H1 (cell line): ENCODE measurements at regions of chr19 and their contacts with region 1.

Region 1: GRCh38 chr19:34838753-34839431 is 65.9 kb upstream of the ZNF599 start:
- DNase-seq: peak; percentile 56 to 87
- H3K4me3 ChIP-seq: peak overlapping the region; percentile 28 to 58 (median 36); a peak in 7 of 8 replicates
- H3K27ac ChIP-seq: no peak overlapping the region
- H3K4me1 ChIP-seq: peaks cover 0 to 10% (median 8%) of the 10 kb centered on the region in 4 experiments; a peak in 6 of 7 replicates
- H3K27me3 ChIP-seq: peaks cover 0 to 19% (median 10%) of the 10 kb centered on the region in 4 experiments; a peak in 5 of 7 replicates
- CTCF ChIP-seq: peak; percentile 78 to 85 (median 83)
- EP300 ChIP-seq: no peak
- POLR2A ChIP-seq: no peak
- RAD21 ChIP-seq: peak; percentile 48 to 68; a peak in 3 of 4 replicates

Region 2: GRCh38 chr19:34772697-34773554 is 66.0 kb before region 1 on chr19 and contains the start of gene ZNF599:
- CTCF ChIA-PET with region 1: interaction called, 10 read pairs
- POLR2A ChIA-PET with region 1: no interaction called
- DNase-seq: peak; percentile 64 to 91
- H3K4me3 ChIP-seq: peak within 1 kb of the TSS; percentile 78 to 93 (median 82)
- H3K27ac ChIP-seq: no peak within 1 kb of the TSS
- H3K4me1 ChIP-seq: peaks cover 0 to 4% (median 0%) of the 10 kb centered on the region in 4 experiments; a peak in 1 of 7 replicates
- H3K27me3 ChIP-seq: peaks cover 0 to 5% (median 2%) of the 10 kb centered on the region in 4 experiments; a peak in 3 of 7 replicates
- CTCF ChIP-seq: no peak
- EP300 ChIP-seq: no peak
- POLR2A ChIP-seq: no peak
- RAD21 ChIP-seq: no peak
- total RNA-seq, gene ZNF599: 3.8 and 4.8 TPM in 2 replicates

Region 3: DNA sequence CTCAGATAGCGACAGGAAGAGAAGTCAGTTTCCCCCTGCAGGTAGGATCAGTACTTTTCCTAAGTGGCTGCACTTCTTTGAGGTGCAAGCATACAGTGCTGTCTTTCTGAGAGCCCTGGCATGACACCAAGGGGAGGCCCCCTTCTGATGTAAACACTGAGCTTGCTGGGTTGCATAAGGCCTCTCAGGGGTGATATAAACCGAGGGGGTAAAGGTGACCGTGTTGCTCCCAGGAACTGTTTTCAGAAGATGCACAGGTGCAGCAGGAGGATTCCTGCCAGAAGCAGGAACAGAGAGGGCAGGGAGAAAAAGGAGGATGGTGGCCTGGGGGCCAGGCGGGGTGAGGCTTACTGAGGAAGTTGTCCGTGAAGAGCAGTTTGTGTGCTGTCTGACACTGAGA is 13.8 kb after region 1 on chr19:
- CTCF ChIA-PET with region 1: interaction called, 15 read pairs
- POLR2A ChIA-PET with region 1: interaction called, 4 read pairs
- DNase-seq: no peak
- H3K4me3 ChIP-seq: no peak overlapping the region
- H3K27ac ChIP-seq: no peak overlapping the region
- H3K4me1 ChIP-seq: 0 out of 7 replicates have a peak, but pooled peaks cover 0 to 2% (median 0%) of the 10 kb centered on the region in 4 experiments
- H3K27me3 ChIP-seq: no peaks in the 10 kb centered on the region
- CTCF ChIP-seq: no peak
- EP300 ChIP-seq: no peak
- POLR2A ChIP-seq: no peak
- RAD21 ChIP-seq: no peak

Region 4: DNA sequence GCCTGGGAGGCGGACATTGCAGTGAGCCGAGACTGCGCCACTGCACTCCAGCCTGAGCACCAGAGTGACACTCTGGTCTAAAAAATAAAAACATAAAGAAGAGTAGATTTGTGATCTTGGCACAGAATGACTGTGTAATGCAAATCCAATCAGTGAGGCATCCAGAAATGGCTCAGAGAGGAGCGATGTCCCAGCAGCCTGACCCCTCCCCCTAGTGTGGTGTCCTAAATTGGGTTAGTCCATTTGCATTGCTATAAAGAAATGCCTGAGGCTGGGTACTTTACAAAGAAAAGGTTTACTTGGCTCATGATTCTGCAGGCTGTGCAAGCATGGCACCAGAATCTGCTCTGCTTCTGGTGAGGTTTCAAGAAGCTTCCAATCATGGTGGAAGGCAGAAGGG is 28.7 kb after region 1 on chr19:
- CTCF ChIA-PET with region 1: interaction called, 12 read pairs
- POLR2A ChIA-PET with region 1: no interaction called
- DNase-seq: no peak
- H3K4me3 ChIP-seq: no peak overlapping the region
- H3K27ac ChIP-seq: no peak overlapping the region
- H3K4me1 ChIP-seq: peaks cover 0 to 3% (median 0%) of the 10 kb centered on the region in 4 experiments; a peak in 2 of 7 replicates
- H3K27me3 ChIP-seq: no peaks in the 10 kb centered on the region
- CTCF ChIP-seq: no peak
- EP300 ChIP-seq: no peak
- POLR2A ChIP-seq: no peak
- RAD21 ChIP-seq: no peak

Region 5: GRCh38 chr19:34974646-34975045 is 135.8 kb after region 1 on chr19:
- CTCF ChIA-PET with region 1: interaction called, 12 read pairs
- POLR2A ChIA-PET with region 1: no interaction called
- DNase-seq: no peak
- H3K4me3 ChIP-seq: no peak overlapping the region
- H3K27ac ChIP-seq: no peak overlapping the region
- H3K4me1 ChIP-seq: peaks cover 0 to 3% (median 0%) of the 10 kb centered on the region in 4 experiments; a peak in 3 of 7 replicates
- H3K27me3 ChIP-seq: no peaks in the 10 kb centered on the region
- CTCF ChIP-seq: no peak
- EP300 ChIP-seq: no peak
- POLR2A ChIP-seq: no peak
- RAD21 ChIP-seq: no peak

Region 6: GRCh38 chr19:35030257-35031071 is 191.6 kb after region 1 on chr19 and contains the start of gene SCN1B:
- CTCF ChIA-PET with region 1: interaction called, 11 read pairs
- POLR2A ChIA-PET with region 1: interaction called, 3 read pairs
- DNase-seq: peak in 1 of 2 experiments; percentile 78
- H3K4me3 ChIP-seq: peak within 1 kb of the TSS; percentile 38 to 69 (median 40)
- H3K27ac ChIP-seq: no peak within 1 kb of the TSS
- H3K4me1 ChIP-seq: peaks cover 0 to 8% (median 4%) of the 10 kb centered on the region in 4 experiments; a peak in 6 of 7 replicates
- H3K27me3 ChIP-seq: peaks cover 4 to 32% (median 28%) of the 10 kb centered on the region in 4 experiments
- CTCF ChIP-seq: no peak
- EP300 ChIP-seq: no peak
- POLR2A ChIP-seq: no peak
- RAD21 ChIP-seq: no peak
- total RNA-seq, gene SCN1B: 3.3 and 3.5 TPM in 2 replicates